ENCODE measurements at regions of chr18 and their contacts with region 1.

Region 1: GRCh38 chr18:48675352-48675761 is 136.5 kb downstream of the CTIF start:
- DNase-seq: peak; percentile 86 to 93 (median 89)
- ATAC-seq: peak; percentile 84 to 92 (median 90)
- H3K4me3 ChIP-seq: no peak overlapping the region
- H3K27ac ChIP-seq: peak overlapping the region in 2 of 12 donors; percentile 13 to 56
- H3K4me1 ChIP-seq: peaks cover 8 to 69% (median 55%) of the 10 kb centered on the region in 12 donors
- H3K27me3 ChIP-seq: no peaks in the 10 kb centered on the region
- CTCF ChIP-seq: peak; percentile 90 to 99 (median 95)
- POLR2A ChIP-seq: no peak

Region 2: DNA sequence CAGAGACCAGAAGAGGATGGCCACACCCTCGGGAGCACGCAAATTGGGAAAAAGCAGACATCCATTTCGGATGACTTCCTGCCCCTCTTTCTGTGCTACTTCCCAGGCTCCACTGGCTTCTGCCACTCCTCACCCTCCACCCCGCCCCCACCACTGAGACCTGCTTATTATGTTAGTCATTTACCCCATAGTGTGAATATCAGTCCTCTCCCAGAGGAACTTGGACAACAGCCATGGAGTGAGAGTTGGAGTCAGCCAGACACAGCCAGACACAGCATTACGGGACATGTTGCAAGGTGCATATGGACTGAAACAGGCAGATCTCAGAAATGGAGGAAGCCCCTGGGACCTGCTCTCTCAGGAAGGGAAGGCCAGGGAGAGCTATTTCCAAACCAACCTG is 84.7 kb before region 1 on chr18:
- intact Hi-C with region 1: no loop called
- DNase-seq: peak in 1 of 5 donors; percentile 77
- ATAC-seq: peak in 3 of 4 donors; percentile 5 to 59 (median 29)
- H3K4me3 ChIP-seq: no peak overlapping the region
- H3K27ac ChIP-seq: peak overlapping the region in 10 of 12 donors; percentile 54 to 87 (median 70)
- H3K4me1 ChIP-seq: peaks cover 0 to 54% (median 28%) of the 10 kb centered on the region in 12 donors
- H3K27me3 ChIP-seq: no peaks in the 10 kb centered on the region
- CTCF ChIP-seq: no peak
- POLR2A ChIP-seq: no peak

Region 3: DNA sequence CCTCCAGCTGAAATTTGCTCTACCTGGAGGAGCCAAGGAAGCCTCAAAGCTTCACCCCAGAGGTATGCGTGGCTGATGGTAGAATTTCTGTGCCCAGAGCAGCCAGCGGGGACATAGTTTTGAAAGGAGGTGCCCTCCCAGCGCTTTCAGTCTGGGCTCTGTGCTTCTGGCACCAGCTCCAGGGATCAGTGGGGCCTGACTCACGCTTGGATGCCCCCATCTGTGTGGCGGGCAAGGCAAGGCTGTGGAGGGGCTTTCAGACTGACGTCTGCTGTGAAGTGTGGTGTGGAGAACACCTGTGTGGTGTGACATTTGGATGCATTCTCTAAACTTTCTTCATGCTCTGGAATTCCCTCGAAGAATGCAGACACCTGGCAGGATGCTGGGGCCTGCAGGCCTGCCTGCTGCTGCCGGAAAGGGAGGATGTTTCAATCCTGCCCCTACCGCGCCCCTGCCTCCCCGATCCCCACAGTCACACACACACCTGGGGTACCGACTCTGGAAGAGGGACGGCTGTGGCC is 52.4 kb before region 1 on chr18:
- intact Hi-C with region 1: no loop called
- DNase-seq: no peak
- ATAC-seq: peak in 2 of 4 donors; percentile 12 to 23
- H3K4me3 ChIP-seq: no peak overlapping the region
- H3K27ac ChIP-seq: peak overlapping the region in 1 of 12 donors; percentile 30
- H3K4me1 ChIP-seq: peaks cover 0 to 12% (median under 1%) of the 10 kb centered on the region in 12 donors
- H3K27me3 ChIP-seq: no peaks in the 10 kb centered on the region
- CTCF ChIP-seq: no peak
- POLR2A ChIP-seq: no peak

Region 4: GRCh38 chr18:48749768-48750167 is 74.4 kb after region 1 on chr18:
- intact Hi-C with region 1: loop called in 3 of 10 experiments (anchors 5 to 10 kb)
- DNase-seq: peak; percentile 83 to 85 (median 83)
- ATAC-seq: peak; percentile 80 to 96 (median 88)
- H3K4me3 ChIP-seq: no peak overlapping the region
- H3K27ac ChIP-seq: peak overlapping the region; percentile 36 to 94 (median 72)
- H3K4me1 ChIP-seq: peaks cover 3 to 58% (median 31%) of the 10 kb centered on the region in 12 donors
- H3K27me3 ChIP-seq: no peaks in the 10 kb centered on the region
- CTCF ChIP-seq: peak; percentile 6 to 61 (median 42)
- POLR2A ChIP-seq: no peak

Region 5: DNA sequence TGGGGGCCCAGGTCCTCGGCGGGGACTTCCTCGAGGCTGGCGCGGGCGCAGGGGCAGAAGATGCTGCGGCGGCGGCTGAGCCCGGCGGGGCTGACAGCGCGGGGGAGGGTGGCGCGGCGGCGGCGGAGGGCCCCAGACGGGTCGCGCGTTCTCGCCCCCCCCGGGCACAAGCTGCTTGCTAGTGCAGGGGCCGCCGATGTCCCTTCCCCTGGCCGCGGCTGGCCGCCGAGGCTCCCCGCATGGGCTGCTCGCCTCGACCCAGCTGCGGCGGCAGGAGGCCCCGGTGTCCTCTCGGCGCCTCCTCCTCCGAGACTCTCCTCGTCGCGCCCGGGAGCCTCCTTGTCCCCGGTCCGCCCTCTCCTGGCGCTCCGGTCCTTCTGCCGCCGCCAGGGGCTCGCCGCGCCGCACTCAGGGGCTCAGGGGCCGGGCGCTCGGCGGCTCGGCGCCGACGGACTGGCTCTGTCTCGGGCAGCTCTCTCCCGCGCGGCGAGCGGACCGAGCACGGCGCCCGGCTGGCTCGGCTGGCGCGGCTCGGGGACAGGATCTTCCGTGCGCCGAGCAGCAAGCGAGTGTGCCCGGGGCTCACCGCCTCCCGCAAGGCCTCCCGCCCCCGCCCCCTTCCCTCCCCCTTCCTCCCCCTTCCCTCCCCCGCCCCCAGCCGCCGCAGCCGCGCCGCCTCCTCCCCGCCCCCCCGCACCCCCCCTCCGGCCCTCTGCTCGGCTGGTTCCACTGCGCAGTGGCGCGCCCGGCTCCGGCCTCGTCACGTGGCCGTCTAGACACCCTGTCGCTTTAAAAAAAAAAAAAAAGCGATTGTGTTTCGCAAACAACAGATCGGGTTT is 276.3 kb after region 1 on chr18:
- intact Hi-C with region 1: loop called in 6 of 10 experiments (anchors 2 to 10 kb)
- DNase-seq: peak; percentile 91 to 95 (median 91)
- ATAC-seq: peak; percentile 74 to 85 (median 77)
- H3K4me3 ChIP-seq: peak overlapping the region; percentile 72 to 98 (median 90)
- H3K27ac ChIP-seq: peak overlapping the region; percentile 95 to 100 (median 98)
- H3K4me1 ChIP-seq: peaks cover under 1 to 57% (median 39%) of the 10 kb centered on the region in 12 donors
- H3K27me3 ChIP-seq: peaks cover 0 to 6% (median 0%) of the 10 kb centered on the region in 9 donors
- CTCF ChIP-seq: peak in 6 of 12 donors; percentile 14 to 54 (median 32)
- POLR2A ChIP-seq: peak in 1 of 2 donors; percentile 87

Region 6: GRCh38 chr18:49183921-49184320 is 508.6 kb after region 1 on chr18:
- intact Hi-C with region 1: loop called (anchors 1 to 10 kb)
- DNase-seq: no peak
- ATAC-seq: no peak
- H3K4me3 ChIP-seq: no peak overlapping the region
- H3K27ac ChIP-seq: no peak overlapping the region
- H3K4me1 ChIP-seq: peaks cover 0 to 17% (median 0%) of the 10 kb centered on the region in 12 donors
- H3K27me3 ChIP-seq: no peaks in the 10 kb centered on the region
- CTCF ChIP-seq: no peak
- POLR2A ChIP-seq: no peak

Region 7: GRCh38 chr18:49412679-49413078 is 737.3 kb after region 1 on chr18:
- intact Hi-C with region 1: loop called in 8 of 10 experiments (anchors 5 to 10 kb)
- DNase-seq: no peak
- ATAC-seq: no peak
- H3K4me3 ChIP-seq: no peak overlapping the region
- H3K27ac ChIP-seq: peak overlapping the region in 3 of 12 donors; percentile 5 to 40 (median 22)
- H3K4me1 ChIP-seq: peaks cover 0 to 16% (median 1%) of the 10 kb centered on the region in 12 donors
- H3K27me3 ChIP-seq: no peaks in the 10 kb centered on the region
- CTCF ChIP-seq: no peak
- POLR2A ChIP-seq: no peak

Region 8: DNA sequence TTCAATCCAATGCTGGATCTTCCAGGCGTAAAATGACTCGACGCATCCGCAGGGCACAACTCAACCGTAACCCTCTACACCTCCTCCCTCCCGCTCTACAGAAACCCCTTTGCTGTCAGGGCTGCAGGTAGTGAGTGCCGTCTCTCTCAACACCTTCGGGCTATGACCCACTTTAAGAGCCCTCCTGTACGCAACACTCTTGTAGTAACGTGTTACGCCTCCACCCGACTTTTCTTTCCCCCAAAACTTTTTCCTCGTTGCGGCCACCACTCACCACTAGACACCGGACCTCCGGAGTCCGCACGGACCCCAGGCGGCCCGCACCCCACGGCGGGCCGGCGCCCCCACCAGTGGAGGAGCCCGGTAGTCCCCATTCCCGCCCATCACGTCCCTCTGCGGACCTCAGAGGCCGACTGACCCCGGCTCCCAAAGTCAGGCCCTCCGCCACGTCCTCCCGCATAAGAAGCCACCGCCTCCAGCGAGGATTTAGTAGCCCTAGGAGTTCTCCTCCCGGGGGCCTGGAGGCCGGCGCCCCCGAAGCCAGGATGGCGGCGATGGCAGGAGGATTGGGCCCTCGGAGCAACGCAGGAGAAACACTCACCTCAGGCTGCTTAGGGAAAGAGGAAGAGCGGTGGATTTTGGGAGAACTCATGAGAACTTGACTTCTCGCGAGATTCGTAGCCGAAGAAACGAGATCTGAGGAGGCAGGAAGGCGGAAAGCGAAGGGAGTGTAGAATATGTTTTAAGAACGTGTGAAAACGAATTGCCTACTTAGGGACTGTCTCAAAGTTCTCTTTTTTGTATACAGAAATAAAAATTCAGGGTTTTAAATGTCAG is 816.7 kb after region 1 on chr18:
- intact Hi-C with region 1: loop called in 1 of 10 experiments (anchors 10 kb)
- DNase-seq: peak; percentile 82 to 92 (median 92)
- ATAC-seq: peak; percentile 89 to 95 (median 90)
- H3K4me3 ChIP-seq: peak within 1 kb of the TSS; percentile 48 to 92 (median 78)
- H3K27ac ChIP-seq: peak within 1 kb of the TSS; percentile 56 to 95 (median 86)
- H3K4me1 ChIP-seq: peaks cover 3 to 46% (median 19%) of the 10 kb centered on the region in 12 donors
- H3K27me3 ChIP-seq: no peaks in the 10 kb centered on the region
- CTCF ChIP-seq: no peak
- POLR2A ChIP-seq: peak; percentile 82 to 94